Left ventricle myocardium inferior (tissue), 1 donor: ENCODE measurements at regions of chr7 and their contacts with region 1.

Region 1: DNA sequence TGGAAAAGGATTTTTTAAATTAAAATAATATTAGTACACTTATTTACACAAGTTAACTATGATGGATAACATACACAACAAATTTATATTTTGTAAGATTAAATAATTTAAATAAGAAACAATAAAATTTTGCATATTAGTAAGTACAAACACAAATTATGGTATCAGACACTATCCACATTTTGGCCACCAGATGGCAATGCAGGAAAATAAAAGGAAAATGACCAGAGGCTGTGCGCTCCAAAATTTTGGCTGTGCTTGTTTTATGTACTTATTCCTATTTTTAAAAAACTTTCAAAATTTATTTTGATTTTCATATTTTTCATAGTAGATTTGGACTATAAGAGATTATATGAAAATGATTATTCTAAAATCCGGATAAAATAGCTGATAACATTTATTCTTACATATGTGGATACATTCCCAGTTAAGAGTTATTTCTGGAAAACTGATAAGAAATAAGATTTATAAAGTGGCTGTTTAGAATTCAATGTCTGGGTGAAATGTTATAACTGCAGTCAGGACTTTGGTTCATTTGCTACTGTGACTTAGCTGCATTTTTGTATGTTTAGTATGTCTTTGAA is 274.7 kb upstream of the HGF start:
- DNase-seq: no peak
- H3K4me3 ChIP-seq: no peak overlapping the region
- H3K27ac ChIP-seq: no peak overlapping the region
- H3K4me1 ChIP-seq: peaks cover 16% of the 10 kb centered on the region
- H3K27me3 ChIP-seq: no peaks in the 10 kb centered on the region
- CTCF ChIP-seq: peak; percentile 80

Region 2: DNA sequence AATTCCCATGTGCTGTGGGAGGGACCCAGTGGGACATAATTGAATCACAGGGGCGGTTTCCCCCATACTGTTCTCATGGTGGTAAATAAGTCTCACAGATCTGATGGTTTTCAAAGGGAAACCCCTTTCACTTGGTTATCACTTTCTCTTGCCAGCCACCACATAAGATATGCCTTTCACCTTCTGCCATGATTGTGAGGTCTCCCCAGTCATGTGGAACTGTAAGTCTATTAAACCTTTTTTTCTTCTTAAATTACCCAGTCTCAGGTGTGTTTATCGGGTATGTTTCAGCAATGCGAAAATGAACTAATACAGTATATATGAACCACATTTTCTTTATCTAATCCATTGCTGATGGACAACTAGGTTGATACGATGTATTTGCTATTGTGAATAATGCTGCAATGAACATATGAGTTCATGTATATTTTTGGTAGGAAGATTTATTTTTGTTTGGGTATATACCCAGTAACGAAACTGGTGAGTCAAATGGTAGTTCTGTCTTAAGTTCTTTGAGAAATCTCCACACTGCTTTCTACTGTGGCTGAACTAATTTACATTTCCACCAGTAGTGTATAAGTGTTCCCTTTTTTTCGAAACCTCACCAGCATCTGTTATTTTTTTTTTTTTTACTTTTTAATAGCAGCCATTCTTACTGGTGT is 204.8 kb before region 1 on chr7:
- intact Hi-C with region 1: no loop called
- DNase-seq: no peak
- H3K4me3 ChIP-seq: no peak overlapping the region
- H3K27ac ChIP-seq: no peak overlapping the region
- H3K4me1 ChIP-seq: no peaks in the 10 kb centered on the region
- H3K27me3 ChIP-seq: no peaks in the 10 kb centered on the region
- CTCF ChIP-seq: no peak

Region 3: DNA sequence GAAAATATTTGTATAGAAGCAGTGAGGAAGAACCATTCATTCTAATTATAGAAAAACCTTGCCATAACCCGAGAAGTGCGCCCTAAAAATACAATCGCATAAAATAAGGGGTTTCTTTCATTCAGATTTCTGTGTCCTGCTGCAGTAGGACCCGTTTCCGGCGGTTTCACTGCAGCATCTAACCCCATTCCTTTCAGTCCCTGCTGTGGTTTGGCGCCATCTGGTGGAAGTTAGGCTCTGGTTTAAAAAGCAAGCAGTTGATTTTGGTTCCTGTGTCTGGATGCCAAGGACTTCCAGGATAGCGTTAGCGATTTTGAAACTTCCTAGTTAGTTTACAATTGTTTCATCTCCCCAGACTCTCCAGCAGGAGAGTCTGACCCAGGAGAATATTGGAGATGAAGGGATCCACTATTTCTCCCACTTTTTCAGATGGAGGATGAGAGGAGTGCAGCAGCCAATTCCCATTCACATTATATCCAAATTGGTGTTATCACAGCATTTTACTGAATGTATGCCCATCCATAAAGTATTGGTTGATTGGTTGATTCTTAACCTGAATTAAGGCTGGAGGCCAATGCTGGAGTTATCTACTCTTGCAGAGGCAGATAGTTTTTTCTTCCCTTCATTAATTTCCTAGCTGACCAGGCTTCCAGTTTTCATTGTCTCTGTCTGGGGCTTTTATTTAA is 527.7 kb after region 1 on chr7:
- intact Hi-C with region 1: loop called (anchors 10 kb)
- DNase-seq: peak; percentile 79
- H3K4me3 ChIP-seq: no peak overlapping the region
- H3K27ac ChIP-seq: no peak overlapping the region
- H3K4me1 ChIP-seq: peaks cover 7% of the 10 kb centered on the region
- H3K27me3 ChIP-seq: no peaks in the 10 kb centered on the region
- CTCF ChIP-seq: peak; percentile 96